HEK293 (cell line): ENCODE measurements at regions of chr9 and their contacts with region 1.

Region 1: DNA sequence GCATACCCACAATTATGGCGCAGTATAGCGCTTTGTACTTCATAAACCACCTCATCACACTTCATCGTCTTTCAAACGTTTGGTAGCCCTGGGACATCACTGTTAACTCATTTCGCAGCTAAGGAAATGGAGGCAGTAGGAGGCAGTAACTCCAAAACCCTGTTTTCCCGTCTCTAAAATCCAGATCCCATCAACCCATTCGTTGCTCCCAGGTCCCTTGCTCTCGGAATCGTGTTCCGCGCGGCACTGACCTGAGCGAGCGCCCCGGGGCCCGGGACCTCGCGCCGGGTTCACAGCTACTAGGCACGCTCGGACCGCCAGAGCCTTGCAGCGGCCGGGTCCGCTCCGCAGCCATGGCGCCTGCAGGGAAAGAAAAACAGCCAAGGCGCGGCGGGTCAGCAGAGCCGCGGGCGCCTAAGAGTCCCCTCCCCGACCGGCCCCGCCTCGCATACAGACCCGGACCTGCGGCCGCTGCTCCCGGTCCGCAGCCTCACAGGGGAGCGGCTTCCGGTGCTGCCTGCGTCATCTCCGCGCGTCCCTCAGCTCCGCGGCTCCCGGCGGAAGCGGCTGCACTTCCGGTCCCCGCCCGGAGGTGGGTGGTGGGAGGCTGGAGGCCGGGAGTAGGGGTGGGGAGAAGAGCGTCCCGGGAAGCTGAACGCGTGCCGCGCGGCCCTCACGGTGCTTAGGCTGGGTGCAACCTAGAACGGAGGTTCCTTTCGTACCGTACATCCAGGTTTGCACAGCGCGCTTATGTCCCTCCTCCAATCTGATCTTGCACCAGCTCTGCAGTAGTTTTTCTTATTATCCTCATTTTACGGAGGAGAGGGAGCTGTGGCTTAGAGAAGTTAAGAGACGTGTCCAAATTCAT is at the start of gene FBXW2:
- H3K4me3 ChIP-seq: peak within 1 kb of the TSS; percentile 84
- H3K27ac ChIP-seq: peak within 1 kb of the TSS; percentile 51; the same call in 1 of the 2 replicates
- H3K4me1 ChIP-seq: no peaks in the 10 kb centered on the region
- CTCF ChIP-seq: no peak; the same call in 1 of the 2 replicates

Region 2: GRCh38 chr9:120774722-120775121 is 18.4 kb before region 1 on chr9:
- CTCF ChIA-PET with region 1: no interaction called
- POLR2A ChIA-PET with region 1: interaction called, 11 read pairs
- H3K4me3 ChIP-seq: no peak overlapping the region
- H3K27ac ChIP-seq: no peak overlapping the region
- H3K4me1 ChIP-seq: no peaks in the 10 kb centered on the region
- CTCF ChIP-seq: no peak

Region 3: DNA sequence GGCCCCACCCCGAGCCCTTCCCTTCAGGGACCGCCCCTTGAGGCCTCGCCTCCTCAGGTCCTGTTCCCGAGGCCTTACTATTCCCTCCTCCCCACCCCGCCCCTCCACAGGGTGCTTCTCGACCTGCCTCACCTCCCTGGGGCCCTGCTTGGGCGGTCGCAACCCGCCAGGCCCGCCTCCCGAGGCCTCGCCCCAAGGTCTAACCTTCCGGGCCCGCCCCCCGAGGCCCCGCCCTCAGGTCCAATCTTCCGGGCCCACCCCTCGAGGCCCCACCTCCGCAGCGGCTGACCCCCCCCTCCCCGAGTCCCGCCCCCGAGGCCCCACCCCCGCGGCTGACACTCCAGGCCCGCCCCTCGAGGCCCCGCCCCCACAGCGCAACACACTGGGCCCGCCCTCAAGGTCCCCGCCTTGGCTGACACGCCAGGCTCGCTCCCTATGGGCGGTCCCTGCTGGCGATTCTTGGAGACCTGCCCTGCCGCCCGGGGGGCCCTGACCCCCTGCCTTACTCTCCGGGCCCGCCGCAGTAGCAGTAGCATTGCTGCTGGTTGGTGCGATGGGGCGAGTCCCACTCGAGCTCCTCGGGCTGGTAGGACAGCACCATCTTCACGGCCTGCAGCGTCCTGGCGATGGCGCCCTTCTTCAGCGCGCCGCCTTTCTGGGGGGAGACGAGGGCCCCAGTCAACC is 75.7 kb after region 1 on chr9:
- CTCF ChIA-PET with region 1: no interaction called
- POLR2A ChIA-PET with region 1: interaction called, 11 read pairs
- H3K4me3 ChIP-seq: peak overlapping the region; percentile 20
- H3K27ac ChIP-seq: 0 out of 2 replicates have a peak overlapping the region, but pooled peaks have one; percentile 12
- H3K4me1 ChIP-seq: no peaks in the 10 kb centered on the region
- CTCF ChIP-seq: peak; percentile 73

Region 4: DNA sequence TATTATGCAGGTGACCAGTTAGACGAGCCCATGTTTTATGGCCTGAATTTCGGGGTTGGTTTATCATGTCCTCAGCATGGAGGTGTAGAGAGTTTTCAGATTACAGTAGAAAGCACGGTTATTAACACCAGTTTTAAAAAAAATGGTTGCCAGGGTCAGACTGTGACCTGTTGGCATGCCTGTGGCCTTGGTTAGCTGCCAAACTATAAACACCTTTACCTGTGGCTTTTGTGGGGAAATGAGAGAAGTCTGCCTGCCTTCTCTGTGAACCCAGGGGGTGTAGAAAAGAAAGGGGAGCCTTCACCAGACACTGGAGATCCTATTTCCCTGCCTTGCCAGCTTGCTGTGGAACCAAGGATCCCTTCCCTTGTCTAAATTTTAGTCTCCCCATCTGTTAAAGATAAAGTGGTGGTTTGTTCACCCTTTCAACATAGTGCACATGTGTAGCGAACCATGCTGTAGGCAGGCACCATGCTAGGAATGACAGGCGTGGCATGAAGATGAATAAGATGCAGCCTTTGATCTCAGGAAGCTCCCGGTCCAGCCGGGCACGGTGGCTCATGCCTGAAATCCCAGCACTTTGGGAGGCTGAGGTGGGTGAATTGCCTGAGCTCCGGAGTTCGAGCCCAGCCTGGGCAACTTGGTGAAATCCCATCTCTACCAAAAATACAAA is 89.9 kb after region 1 on chr9:
- CTCF ChIA-PET with region 1: no interaction called
- POLR2A ChIA-PET with region 1: interaction called, 10 read pairs
- H3K4me3 ChIP-seq: no peak overlapping the region
- H3K27ac ChIP-seq: no peak overlapping the region
- H3K4me1 ChIP-seq: no peaks in the 10 kb centered on the region
- CTCF ChIP-seq: no peak